IMR-90 (cell line): ENCODE measurements at regions of chr1 and their contacts with region 1.

Region 1: DNA sequence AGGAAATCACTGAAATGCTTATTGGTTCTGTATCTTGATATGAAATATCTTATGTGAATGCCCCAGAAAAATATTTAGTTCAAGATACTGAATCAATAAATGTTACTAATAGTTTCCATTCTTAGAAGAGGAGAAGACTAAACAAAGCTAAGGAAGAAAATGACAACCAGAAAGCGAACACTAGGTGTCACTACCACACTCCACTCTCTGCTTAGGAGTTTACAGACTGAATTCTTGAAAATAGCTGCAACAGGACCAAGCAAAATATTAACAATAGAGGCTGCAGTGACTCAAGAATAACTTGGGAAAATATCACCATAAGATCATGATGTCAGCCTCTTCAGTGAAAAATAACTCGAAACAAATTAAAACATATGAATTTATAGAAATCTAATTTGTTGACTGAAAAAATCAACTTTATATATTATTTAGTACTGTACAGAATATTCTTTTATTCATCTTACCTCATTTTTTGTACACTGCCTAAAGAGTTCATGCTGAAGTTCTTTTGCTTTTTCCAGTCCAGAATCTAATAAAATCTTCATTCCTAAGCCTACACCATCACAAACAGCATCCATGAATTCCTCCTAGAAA is 61.6 kb downstream of the KIF14 start:
- DNase-seq: peak; percentile 77
- ATAC-seq: peak; percentile 94
- H3K4me3 ChIP-seq: no peak overlapping the region
- H3K27ac ChIP-seq: no peak overlapping the region
- H3K4me1 ChIP-seq: no peaks in the 10 kb centered on the region
- H3K27me3 ChIP-seq: no peaks in the 10 kb centered on the region
- CTCF ChIP-seq: peak; percentile 74
- POLR2A ChIP-seq: no peak
- RAD21 ChIP-seq: peak; percentile 74

Region 2: DNA sequence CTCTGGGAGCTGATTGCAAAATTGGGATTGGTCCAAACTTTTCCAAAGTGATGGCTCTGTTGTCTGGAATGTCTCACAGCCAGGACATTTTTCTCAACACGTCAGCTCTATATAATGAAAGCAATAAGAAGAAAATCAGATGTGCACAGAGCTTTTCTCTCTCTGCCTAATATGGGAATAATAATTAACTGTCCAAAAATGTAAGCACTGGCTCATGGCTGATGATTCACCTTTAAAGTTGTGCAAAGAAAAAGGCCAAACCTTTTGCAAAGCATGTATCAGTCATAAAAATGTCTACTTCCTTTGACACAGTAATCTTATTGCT is 179.6 kb before region 1 on chr1:
- CTCF ChIA-PET with region 1: no interaction called
- POLR2A ChIA-PET with region 1: no interaction called
- dilution Hi-C with region 1: no loop called
- in situ Hi-C with region 1: no loop called
- intact Hi-C with region 1: no loop called
- DNase-seq: peak; percentile 95
- ATAC-seq: peak; percentile 83
- H3K4me3 ChIP-seq: no peak overlapping the region
- H3K27ac ChIP-seq: peak overlapping the region; percentile 64; the same call in 1 of the 2 replicates
- H3K4me1 ChIP-seq: peaks cover 4% of the 10 kb centered on the region
- H3K27me3 ChIP-seq: no peaks in the 10 kb centered on the region
- CTCF ChIP-seq: no peak
- POLR2A ChIP-seq: no peak
- RAD21 ChIP-seq: 0 out of 2 replicates have a peak, but pooled peaks have one; percentile 12

Region 3: GRCh38 chr1:200588698-200589097 is 29.7 kb after region 1 on chr1:
- CTCF ChIA-PET with region 1: no interaction called
- POLR2A ChIA-PET with region 1: no interaction called
- dilution Hi-C with region 1: no loop called
- in situ Hi-C with region 1: no loop called
- intact Hi-C with region 1: no loop called
- DNase-seq: no peak
- ATAC-seq: no peak
- H3K4me3 ChIP-seq: no peak overlapping the region
- H3K27ac ChIP-seq: no peak overlapping the region
- H3K4me1 ChIP-seq: no peaks in the 10 kb centered on the region
- H3K27me3 ChIP-seq: no peaks in the 10 kb centered on the region
- CTCF ChIP-seq: no peak
- POLR2A ChIP-seq: no peak
- RAD21 ChIP-seq: no peak

Region 4: GRCh38 chr1:201506556-201507359 is 947.8 kb after region 1 on chr1 and contains the start of gene CSRP1:
- CTCF ChIA-PET with region 1: no interaction called
- POLR2A ChIA-PET with region 1: interaction called, 10 read pairs
- dilution Hi-C with region 1: no loop called
- in situ Hi-C with region 1: no loop called
- intact Hi-C with region 1: no loop called
- DNase-seq: peak; percentile 87
- ATAC-seq: peak; percentile 76
- H3K4me3 ChIP-seq: peak within 1 kb of the TSS; percentile 79
- H3K27ac ChIP-seq: peak within 1 kb of the TSS; percentile 94
- H3K4me1 ChIP-seq: peaks cover 30% of the 10 kb centered on the region
- H3K27me3 ChIP-seq: no peaks in the 10 kb centered on the region
- CTCF ChIP-seq: no peak
- POLR2A ChIP-seq: peak; percentile 99
- RAD21 ChIP-seq: no peak
- total RNA-seq, gene CSRP1: 1,498 and 1,861 TPM in 2 replicates